ENCODE measurements at regions of chr4 and their contacts with region 1.

Region 1: GRCh38 chr4:23135792-23136645 is 443.3 kb downstream of the GBA3 start:
- DNase-seq: peak; percentile 25
- CTCF ChIP-seq: peak; percentile 72

Region 2: GRCh38 chr4:23122666-23123400 is 13.2 kb before region 1 on chr4:
- CTCF ChIA-PET with region 1: interaction called, 48 read pairs
- POLR2A ChIA-PET with region 1: no interaction called
- DNase-seq: no peak
- CTCF ChIP-seq: no peak

Region 3: DNA sequence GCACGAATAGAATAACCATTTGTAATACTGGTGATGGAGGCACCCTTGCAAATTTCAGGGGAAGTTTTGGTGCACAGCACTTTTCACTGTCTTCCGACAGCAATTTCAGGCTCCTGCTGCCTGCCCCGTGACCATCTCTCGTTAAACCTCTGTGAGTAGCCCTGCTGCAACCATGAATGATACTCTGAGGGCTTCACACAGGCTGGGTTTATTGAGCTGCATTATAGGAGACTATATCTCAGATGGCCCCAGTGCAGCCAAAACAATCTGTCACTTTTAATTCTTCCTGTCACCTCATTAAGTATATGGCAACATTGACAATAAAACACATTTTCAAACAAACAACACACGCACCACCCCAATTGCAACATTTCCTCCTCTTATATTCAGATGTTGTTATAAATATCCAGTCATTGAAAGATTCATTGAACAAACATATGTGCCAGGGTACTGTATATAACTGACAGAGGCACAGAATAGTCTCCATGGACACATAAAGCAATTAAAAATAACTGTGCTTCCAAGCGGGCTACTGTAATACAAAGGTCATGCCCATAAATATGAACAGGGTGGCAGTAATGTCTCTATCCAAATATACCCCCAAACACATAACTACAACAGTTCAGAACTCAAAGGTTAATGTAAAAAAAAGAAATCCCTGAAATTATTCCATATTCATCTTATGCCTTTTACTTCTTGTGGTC is 33.7 kb after region 1 on chr4:
- CTCF ChIA-PET with region 1: interaction called, 12 read pairs
- POLR2A ChIA-PET with region 1: no interaction called
- DNase-seq: no peak
- CTCF ChIP-seq: no peak

Region 4: GRCh38 chr4:24002330-24002966 is 866.4 kb after region 1 on chr4:
- CTCF ChIA-PET with region 1: no interaction called
- POLR2A ChIA-PET with region 1: no interaction called
- DNase-seq: no peak
- CTCF ChIP-seq: no peak

Region 5: DNA sequence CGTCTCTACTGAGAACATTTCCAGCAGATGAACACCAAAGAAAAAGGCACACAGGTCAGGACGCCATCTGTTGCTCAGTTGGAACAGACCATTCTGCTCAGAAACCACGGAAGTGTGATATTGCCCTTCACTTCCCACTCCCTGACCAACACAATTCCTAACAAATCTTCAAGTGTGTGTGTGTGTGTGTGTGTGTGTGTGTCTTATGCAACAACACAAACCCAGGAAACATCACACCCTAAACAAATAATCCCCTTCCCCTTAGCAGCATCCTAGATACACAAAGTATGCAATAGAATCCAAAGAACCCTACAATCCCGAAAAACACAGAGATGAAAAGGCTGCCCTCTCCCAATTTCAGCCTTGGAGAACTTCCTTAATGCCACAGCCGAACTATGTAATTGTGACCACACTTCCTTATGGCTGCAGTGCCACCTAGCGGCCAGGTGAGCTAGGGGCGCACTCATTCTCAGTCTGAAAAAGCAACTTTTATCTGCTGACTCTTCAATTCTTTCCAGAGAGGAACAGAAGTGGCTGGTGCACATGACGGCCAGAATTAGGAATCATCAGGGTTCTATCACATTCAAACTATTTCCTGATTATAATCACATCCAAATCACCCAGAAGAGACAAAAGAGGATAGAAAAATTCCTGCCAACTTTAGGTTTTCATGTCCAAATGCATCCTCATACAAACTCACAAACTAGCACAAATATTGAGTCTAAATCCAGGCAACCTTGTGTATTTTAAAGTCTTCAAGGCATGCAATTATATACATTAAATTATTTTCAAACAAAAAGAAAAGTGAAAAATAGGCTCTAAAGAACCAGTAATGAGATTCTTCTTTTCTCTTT is 1283.4 kb after region 1 on chr4:
- CTCF ChIA-PET with region 1: interaction called, 23 read pairs
- POLR2A ChIA-PET with region 1: no interaction called
- DNase-seq: peak; percentile 73
- CTCF ChIP-seq: peak; percentile 99

Measured in GM10248 (cell line).